ENCODE measurements at regions of chr2 and their contacts with region 1.

Region 1: GRCh38 chr2:41194230-41194629 is 742.3 kb upstream of the SLC8A1 start:
- DNase-seq: no peak
- H3K4me3 ChIP-seq: no peak overlapping the region
- H3K27ac ChIP-seq: no peak overlapping the region
- H3K4me1 ChIP-seq: no peaks in the 10 kb centered on the region
- H3K27me3 ChIP-seq: no peaks in the 10 kb centered on the region
- CTCF ChIP-seq: no peak

Region 2: GRCh38 chr2:41160439-41160838 is 33.8 kb before region 1 on chr2:
- CTCF ChIA-PET with region 1: no interaction called
- dilution Hi-C with region 1: loop called (anchors 5 kb)
- in situ Hi-C with region 1: no loop called
- intact Hi-C with region 1: no loop called
- DNase-seq: no peak
- H3K4me3 ChIP-seq: no peak overlapping the region
- H3K27ac ChIP-seq: no peak overlapping the region
- H3K4me1 ChIP-seq: no peaks in the 10 kb centered on the region
- H3K27me3 ChIP-seq: no peaks in the 10 kb centered on the region
- CTCF ChIP-seq: no peak

Measured in mammary epithelial cell (primary cell).